Tibial artery (tissue), 4 donors: ENCODE measurements at regions of chr15 and their contacts with region 1.

Region 1: DNA sequence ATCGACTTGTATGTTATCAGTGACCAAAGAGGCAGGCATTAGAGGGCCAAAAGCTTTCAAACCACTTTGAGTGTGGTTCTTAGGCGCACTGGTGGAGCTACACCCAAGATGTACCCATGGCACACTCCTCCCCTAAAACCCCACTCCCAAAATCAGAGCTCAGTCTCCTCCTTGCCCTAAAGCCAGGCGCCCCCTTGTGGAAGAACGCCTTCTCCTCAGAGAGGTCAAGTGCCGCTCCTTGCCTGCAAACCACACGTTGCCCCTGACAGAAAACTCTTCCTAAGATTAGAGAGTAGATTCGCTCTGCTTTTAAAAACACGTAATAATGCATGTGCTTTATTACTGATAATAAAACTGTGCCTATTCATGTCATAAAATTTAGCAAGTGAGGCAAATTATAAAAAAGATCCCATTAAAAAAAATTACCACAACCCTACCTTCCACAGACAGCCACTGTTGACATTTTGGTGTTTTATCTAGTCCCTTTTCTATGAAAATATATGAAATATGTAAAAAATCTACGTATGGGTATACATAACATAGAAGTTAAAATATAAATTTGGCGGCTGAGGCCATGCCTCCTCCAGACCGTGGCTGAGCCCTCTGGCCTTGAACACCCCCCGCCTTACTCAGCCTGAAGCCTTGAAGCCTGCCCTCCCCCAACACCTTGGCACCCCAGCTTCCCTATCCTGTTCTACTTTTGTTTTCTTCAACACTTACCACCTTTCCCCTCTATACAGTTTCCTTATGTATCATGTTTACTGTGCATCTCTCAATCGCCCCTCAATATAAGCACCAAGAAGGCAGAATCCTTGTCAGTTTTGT is 33.5 kb downstream of the BCL2L10 start:
- DNase-seq: peak; percentile 78 to 81
- H3K4me3 ChIP-seq: no peak overlapping the region
- H3K27ac ChIP-seq: no peak overlapping the region
- H3K4me1 ChIP-seq: no peaks in the 10 kb centered on the region
- H3K27me3 ChIP-seq: no peaks in the 10 kb centered on the region
- CTCF ChIP-seq: peak; percentile 66 to 68

Region 2: DNA sequence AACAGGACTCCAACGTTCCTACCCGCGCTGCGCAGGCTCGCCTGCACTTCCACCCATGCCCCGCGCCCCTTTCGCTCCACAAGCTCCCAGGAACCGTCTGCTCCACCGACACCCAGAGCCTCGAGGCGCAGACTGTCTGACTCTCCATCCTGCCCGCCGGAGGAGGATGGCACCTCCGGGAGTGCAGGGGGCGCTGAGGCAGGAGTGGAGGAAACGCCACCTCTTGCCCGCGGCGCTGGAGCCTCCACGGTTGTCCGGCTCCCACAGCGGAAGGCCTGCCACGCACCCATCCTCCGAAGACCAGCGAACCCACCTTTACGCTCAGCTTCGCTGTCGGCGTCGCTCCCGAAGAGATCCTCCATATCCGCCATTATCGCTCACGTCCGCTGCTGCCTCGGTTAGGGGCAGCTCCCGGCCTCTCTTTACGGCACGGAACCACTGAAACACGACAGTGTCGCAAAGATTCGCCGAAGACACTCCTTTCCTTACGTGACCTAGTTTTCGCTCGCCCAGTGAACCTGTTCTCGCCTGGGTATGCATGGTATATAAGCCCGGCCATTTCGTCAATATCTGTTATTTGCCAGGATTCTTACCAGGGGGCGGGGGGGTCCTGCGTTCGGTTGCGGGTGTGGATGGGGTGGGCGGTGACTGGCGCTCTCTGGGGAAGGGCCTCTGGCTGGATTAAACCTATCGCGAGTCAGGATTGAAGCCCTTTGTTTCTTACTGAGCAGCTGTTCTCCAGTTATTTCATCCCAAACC is 107.5 kb before region 1 on chr15 and contains the start of gene LEO1:
- intact Hi-C with region 1: loop called (anchors 5 kb)
- DNase-seq: peak; percentile 91 to 93
- H3K4me3 ChIP-seq: peak within 1 kb of the TSS; percentile 68 to 71
- H3K27ac ChIP-seq: peak within 1 kb of the TSS; percentile 86 to 88
- H3K4me1 ChIP-seq: peaks cover 0 to 15% (median 9%) of the 10 kb centered on the region in 4 donors
- H3K27me3 ChIP-seq: no peaks in the 10 kb centered on the region
- CTCF ChIP-seq: peak; percentile 38 to 42